Left ventricle myocardium superior (tissue), 1 donor: ENCODE measurements at regions of chr11 and their contacts with region 1.

Region 1: DNA sequence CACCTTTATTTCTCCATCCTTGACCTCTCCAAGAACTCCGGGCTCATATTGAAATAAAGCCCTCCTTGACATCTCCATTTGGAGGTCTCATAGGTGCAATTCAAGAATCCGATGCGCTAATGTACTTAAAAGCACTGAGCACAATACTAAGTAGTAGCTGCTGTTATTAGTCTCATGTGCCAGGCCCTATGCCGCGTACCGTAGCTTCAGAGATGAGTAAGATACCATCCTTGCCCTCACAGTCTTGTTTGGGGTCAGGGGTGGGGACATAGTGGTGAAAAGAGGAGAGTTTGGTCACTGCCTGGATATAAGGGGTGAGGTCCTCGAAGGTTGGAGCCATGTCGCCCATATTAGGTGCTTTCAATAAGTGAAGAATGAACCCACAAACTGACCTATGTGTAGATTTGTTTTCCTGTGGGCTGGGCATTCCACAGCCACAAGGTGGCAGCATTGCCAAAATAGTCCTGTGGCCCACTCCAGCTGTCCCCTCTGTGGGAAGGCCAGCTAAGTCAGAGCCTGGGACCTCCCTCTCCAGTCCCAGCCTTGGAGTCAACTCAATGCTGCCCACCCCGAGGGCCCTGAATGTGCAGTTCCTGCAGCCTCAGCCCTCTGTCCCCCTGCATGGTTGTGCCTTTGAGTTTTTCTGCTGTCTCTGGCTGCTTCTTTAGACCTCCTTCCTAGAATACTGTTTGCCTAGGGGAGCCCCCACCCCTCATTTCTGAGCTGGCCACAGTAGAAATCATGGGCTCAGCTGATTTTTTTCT is 6.5 kb downstream of the DCPS start:
- DNase-seq: peak; percentile 86
- ATAC-seq: peak; percentile 93

Region 2: DNA sequence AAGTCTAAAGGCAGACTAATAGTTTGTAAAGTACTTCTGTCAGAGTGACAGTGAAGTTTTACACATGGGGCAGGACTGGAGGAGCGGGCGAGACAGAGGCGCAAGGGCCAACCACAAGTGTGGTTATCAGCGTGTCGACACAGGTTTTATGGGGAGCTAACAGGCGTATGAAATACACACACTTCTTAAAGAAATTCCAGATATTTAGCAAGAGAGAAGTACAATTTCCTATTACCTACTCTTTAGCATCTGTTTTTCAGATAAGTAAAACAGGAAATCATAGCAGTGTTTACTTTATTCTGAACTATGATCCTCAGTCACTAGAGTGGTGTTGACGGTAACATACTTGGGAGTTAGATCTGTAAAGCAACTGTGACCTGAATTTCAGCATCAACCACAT is 342.1 kb before region 1 on chr11:
- intact Hi-C with region 1: no loop called
- DNase-seq: no peak
- ATAC-seq: no peak

Region 3: DNA sequence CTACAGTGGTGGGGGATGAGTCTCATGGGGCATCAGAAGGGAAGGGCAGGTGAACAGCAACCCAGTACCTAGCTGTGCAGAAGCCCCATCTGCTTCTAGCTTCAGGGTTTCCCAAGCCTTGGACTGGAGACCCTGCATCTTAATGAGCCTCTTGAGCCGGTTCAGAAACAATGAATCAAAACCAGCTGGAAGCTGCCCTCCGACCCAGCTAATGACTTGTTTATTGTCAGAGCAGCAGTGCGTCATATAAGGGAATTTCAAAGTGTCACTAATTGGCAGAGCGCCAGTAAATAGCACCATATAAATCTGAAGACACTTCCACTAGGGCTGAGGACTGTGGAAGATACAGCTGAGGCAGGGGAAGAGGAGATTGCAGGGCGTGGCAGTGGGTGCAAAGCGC is 156.4 kb before region 1 on chr11:
- intact Hi-C with region 1: no loop called
- DNase-seq: no peak
- ATAC-seq: no peak

Region 4: GRCh38 chr11:126431401-126432064 is 121.1 kb after region 1 on chr11:
- intact Hi-C with region 1: loop called (anchors 10 kb)
- DNase-seq: peak; percentile 77
- ATAC-seq: peak; percentile 73

Region 5: GRCh38 chr11:126480410-126481302 is 170.2 kb after region 1 on chr11:
- intact Hi-C with region 1: loop called (anchors 1 kb)
- DNase-seq: peak; percentile 81
- ATAC-seq: peak; percentile 93